ENCODE measurements at regions of chr17 and their contacts with region 1.

Region 1: GRCh38 chr17:38557836-38558727 is 47.7 kb downstream of the SRCIN1 start:
- DNase-seq: peak; percentile 86
- ATAC-seq: peak; percentile 80
- H3K4me3 Mint-ChIP-seq: peak overlapping the region; percentile 91
- H3K27ac Mint-ChIP-seq: peak overlapping the region; percentile 31
- H3K4me1 Mint-ChIP-seq: peaks cover 25% of the 10 kb centered on the region
- H3K27me3 Mint-ChIP-seq: peaks cover 18% of the 10 kb centered on the region
- CTCF ChIP-seq: no peak

Region 2: GRCh38 chr17:38509008-38509771 is 48.9 kb before region 1 on chr17:
- CTCF ChIA-PET with region 1: no interaction called
- POLR2A ChIA-PET with region 1: no interaction called
- intact Hi-C with region 1: no loop called
- DNase-seq: peak; percentile 54
- ATAC-seq: peak; percentile 86
- H3K4me3 Mint-ChIP-seq: peak overlapping the region; percentile 80
- H3K27ac Mint-ChIP-seq: no peak overlapping the region
- H3K4me1 Mint-ChIP-seq: peaks cover 7% of the 10 kb centered on the region
- H3K27me3 Mint-ChIP-seq: peaks cover 39% of the 10 kb centered on the region
- CTCF ChIP-seq: no peak

Region 3: GRCh38 chr17:38571833-38572668 is 14.0 kb after region 1 on chr17:
- CTCF ChIA-PET with region 1: interaction called, 4 read pairs
- POLR2A ChIA-PET with region 1: no interaction called
- intact Hi-C with region 1: loop called (anchors 1 kb)
- DNase-seq: no peak
- ATAC-seq: peak; percentile 62
- H3K4me3 Mint-ChIP-seq: peak overlapping the region; percentile 60
- H3K27ac Mint-ChIP-seq: no peak overlapping the region
- H3K4me1 Mint-ChIP-seq: peaks cover 15% of the 10 kb centered on the region
- H3K27me3 Mint-ChIP-seq: peaks cover 81% of the 10 kb centered on the region
- CTCF ChIP-seq: no peak

Region 4: GRCh38 chr17:38595892-38596291 is 37.8 kb after region 1 on chr17:
- CTCF ChIA-PET with region 1: no interaction called
- POLR2A ChIA-PET with region 1: no interaction called
- intact Hi-C with region 1: no loop called
- DNase-seq: no peak
- ATAC-seq: no peak
- H3K4me3 Mint-ChIP-seq: no peak overlapping the region
- H3K27ac Mint-ChIP-seq: no peak overlapping the region
- H3K4me1 Mint-ChIP-seq: peaks cover 15% of the 10 kb centered on the region
- H3K27me3 Mint-ChIP-seq: peaks cover 72% of the 10 kb centered on the region
- CTCF ChIP-seq: no peak

Region 5: DNA sequence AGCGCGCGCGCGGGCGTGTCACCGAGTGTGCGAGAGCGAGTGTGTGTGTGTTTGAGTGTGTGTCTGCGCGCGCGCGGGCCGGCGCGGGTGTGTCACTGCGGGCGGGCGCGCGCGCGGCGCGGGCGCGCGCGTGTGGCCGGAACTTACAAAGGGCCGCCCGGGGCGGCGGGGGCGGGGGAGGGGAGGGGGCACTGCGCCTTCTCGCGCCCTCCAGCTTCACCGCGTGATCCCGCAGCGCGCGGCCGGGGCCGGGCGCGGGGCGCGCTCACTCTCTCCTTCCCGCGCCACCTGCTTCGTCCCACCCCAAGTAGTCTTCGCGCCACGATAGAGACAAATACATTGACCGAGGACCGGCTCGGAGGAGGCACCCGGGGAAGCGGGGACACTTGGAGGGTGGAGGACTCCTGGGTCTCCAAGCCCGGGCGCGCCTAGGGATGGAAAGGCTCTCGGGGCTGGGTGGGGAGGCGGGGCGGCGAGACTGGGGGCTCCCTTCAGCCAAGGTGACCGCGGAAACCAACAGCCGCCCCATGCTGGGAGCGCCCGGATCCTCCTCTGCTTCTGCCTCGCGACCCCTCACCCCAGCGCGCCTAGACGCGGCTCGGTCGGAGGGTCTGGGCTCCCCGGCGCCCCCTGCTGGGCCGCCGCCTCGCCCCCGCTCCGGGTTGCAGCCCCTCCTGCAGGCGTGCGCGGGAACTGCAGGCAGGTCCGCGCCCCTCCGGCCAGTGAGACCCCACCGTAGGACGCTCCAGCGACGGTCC is 48.0 kb after region 1 on chr17 and contains the start of gene SRCIN1:
- CTCF ChIA-PET with region 1: interaction called, 4 read pairs
- POLR2A ChIA-PET with region 1: no interaction called
- intact Hi-C with region 1: loop called (anchors 1 kb)
- DNase-seq: peak; percentile 46
- ATAC-seq: peak; percentile 57
- H3K4me3 Mint-ChIP-seq: peak within 1 kb of the TSS; percentile 72
- H3K27ac Mint-ChIP-seq: no peak within 1 kb of the TSS
- H3K4me1 Mint-ChIP-seq: peaks cover 15% of the 10 kb centered on the region
- H3K27me3 Mint-ChIP-seq: peaks cover 59% of the 10 kb centered on the region
- CTCF ChIP-seq: peak; percentile 80
- total RNA-seq, gene SRCIN1: 0.24 and 0.35 TPM in 2 replicates

Region 6: GRCh38 chr17:38674749-38675615 is 116.9 kb after region 1 on chr17 and contains the start of gene EPOP:
- CTCF ChIA-PET with region 1: interaction called, 4 read pairs
- POLR2A ChIA-PET with region 1: interaction called, 6 read pairs
- intact Hi-C with region 1: loop called (anchors 2 kb)
- DNase-seq: peak; percentile 79
- ATAC-seq: peak; percentile 88
- H3K4me3 Mint-ChIP-seq: peak within 1 kb of the TSS; percentile 70
- H3K27ac Mint-ChIP-seq: no peak within 1 kb of the TSS
- H3K4me1 Mint-ChIP-seq: peaks cover 32% of the 10 kb centered on the region
- H3K27me3 Mint-ChIP-seq: peaks cover 29% of the 10 kb centered on the region
- CTCF ChIP-seq: no peak
- total RNA-seq, gene EPOP: 2.8 and 3.0 TPM in 2 replicates

Region 7: GRCh38 chr17:38735161-38735997 is 177.3 kb after region 1 on chr17:
- CTCF ChIA-PET with region 1: interaction called, 41 read pairs
- POLR2A ChIA-PET with region 1: interaction called, 9 read pairs
- intact Hi-C with region 1: loop called (anchors 1 kb)
- DNase-seq: peak; percentile 76
- ATAC-seq: peak; percentile 39
- H3K4me3 Mint-ChIP-seq: no peak overlapping the region
- H3K27ac Mint-ChIP-seq: no peak overlapping the region
- H3K4me1 Mint-ChIP-seq: peaks cover 26% of the 10 kb centered on the region
- H3K27me3 Mint-ChIP-seq: peaks cover 5% of the 10 kb centered on the region
- CTCF ChIP-seq: no peak

Measured in activated B cell treated with CpG ODN at 0.5 μM for 24 hours (primary cell).